Tibial artery (tissue), 4 donors: ENCODE measurements at regions of chr18 and their contacts with region 1.

Region 1: DNA sequence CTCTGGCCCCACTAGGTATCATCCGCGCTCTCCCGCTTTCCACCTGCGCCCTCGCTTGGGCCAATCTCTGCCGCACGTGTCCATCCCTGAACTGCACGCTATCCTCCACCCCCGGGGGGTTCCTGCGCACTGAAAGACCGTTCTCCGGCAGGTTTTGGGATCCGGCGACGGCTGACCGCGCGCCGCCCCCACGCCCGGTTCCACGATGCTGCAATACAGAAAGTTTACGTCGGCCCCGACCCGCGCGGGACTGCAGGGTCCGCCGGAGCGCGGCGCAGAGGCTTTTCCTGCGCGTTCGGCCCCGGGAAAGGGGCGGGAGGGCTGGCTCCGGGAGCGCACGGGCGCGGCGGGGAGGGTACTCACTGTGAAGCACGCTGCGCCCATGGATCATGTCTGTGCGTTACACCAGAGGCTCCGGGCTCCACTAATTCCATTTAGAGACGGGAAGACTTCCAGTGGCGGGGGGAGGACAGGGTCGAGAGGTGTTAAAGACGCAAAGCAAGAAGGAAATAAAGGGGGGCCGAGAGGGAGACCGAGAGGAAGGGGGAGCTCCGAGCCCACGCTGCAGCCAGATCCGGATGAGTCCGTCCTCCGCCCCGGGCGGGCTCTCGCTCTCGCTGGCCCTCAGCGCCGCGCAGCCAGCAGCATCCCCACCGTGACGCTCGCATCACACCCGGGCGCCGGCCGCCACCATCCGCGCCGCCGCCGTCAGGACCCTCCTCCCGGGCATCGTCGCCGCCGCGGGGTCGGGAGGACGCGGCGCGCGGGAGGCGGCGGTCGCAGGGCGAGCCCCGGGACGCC is 686 bp downstream of the NETO1 start:
- DNase-seq: no peak
- H3K4me3 ChIP-seq: peak overlapping the region; percentile 16 to 40
- H3K27ac ChIP-seq: no peak overlapping the region
- H3K4me1 ChIP-seq: peaks cover 0 to 29% (median 17%) of the 10 kb centered on the region in 4 donors
- H3K27me3 ChIP-seq: peaks cover 0 to 33% of the 10 kb centered on the region in 2 donors
- CTCF ChIP-seq: no peak

Region 2: DNA sequence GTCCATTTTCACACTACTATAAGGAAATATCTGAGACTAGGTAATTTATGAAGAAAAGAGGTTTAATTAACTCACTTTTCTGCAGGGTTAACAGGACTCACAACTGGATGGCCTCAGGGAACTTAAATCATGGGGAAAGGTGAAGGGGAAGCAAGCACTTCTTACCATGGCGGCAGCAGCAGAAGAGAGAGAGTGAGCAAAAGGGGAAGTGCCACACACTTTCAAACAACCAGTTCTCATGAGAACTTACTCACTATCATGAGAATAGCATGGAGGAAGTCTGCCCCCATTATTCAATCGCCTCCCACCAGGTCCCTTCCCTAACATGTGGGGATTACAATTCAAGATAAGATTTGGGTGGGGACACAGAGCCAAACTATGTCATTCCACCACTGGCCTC is 55.8 kb after region 1 on chr18:
- intact Hi-C with region 1: loop called (anchors 10 kb)
- DNase-seq: no peak
- H3K4me3 ChIP-seq: no peak overlapping the region
- H3K27ac ChIP-seq: no peak overlapping the region
- H3K4me1 ChIP-seq: no peaks in the 10 kb centered on the region
- H3K27me3 ChIP-seq: no peaks in the 10 kb centered on the region
- CTCF ChIP-seq: no peak

Region 3: GRCh38 chr18:73352546-73352945 is 485.4 kb after region 1 on chr18:
- intact Hi-C with region 1: no loop called
- DNase-seq: no peak
- H3K4me3 ChIP-seq: no peak overlapping the region
- H3K27ac ChIP-seq: no peak overlapping the region
- H3K4me1 ChIP-seq: no peaks in the 10 kb centered on the region
- H3K27me3 ChIP-seq: no peaks in the 10 kb centered on the region
- CTCF ChIP-seq: no peak